ENCODE measurements at regions of chr1 and their contacts with region 1.

Region 1: GRCh38 chr1:38012363-38013226 is at the start of gene UTP11:
- DNase-seq: peak; percentile 68 to 96 (median 90)
- ATAC-seq: peak; percentile 90 to 94
- H3K4me3 Mint-ChIP-seq: peak within 1 kb of the TSS; percentile 93 to 100 (median 99)
- H3K27ac Mint-ChIP-seq: peak within 1 kb of the TSS; percentile 92 to 100 (median 98)
- H3K4me1 Mint-ChIP-seq: peaks cover 23 to 69% (median 57%) of the 10 kb centered on the region in 4 donors
- H3K27me3 Mint-ChIP-seq: no peaks in the 10 kb centered on the region
- polyA plus RNA-seq, gene UTP11: 16.6 to 21.4 (median 17.4) TPM

Region 2: GRCh38 chr1:37974567-37974966 is 38.0 kb before region 1 on chr1:
- POLR2A ChIA-PET with region 1: no interaction called
- DNase-seq: no peak
- ATAC-seq: no peak
- H3K4me3 Mint-ChIP-seq: no peak overlapping the region
- H3K27ac Mint-ChIP-seq: peak overlapping the region in 3 of 10 donors; percentile 6 to 49 (median 32)
- H3K4me1 Mint-ChIP-seq: peaks cover 10 to 31% (median 20%) of the 10 kb centered on the region in 4 donors
- H3K27me3 Mint-ChIP-seq: no peaks in the 10 kb centered on the region

Region 3: GRCh38 chr1:37989361-37989930 is 23.1 kb before region 1 on chr1:
- POLR2A ChIA-PET with region 1: interaction called, 80 read pairs
- DNase-seq: peak in 5 of 10 donors; percentile 26 to 69 (median 37)
- ATAC-seq: peak; percentile 42 to 47
- H3K4me3 Mint-ChIP-seq: peak overlapping the region; percentile 89 to 100 (median 98)
- H3K27ac Mint-ChIP-seq: peak overlapping the region; percentile 91 to 99 (median 96)
- H3K4me1 Mint-ChIP-seq: peaks cover 9 to 36% (median 29%) of the 10 kb centered on the region in 4 donors
- H3K27me3 Mint-ChIP-seq: no peaks in the 10 kb centered on the region

Region 4: DNA sequence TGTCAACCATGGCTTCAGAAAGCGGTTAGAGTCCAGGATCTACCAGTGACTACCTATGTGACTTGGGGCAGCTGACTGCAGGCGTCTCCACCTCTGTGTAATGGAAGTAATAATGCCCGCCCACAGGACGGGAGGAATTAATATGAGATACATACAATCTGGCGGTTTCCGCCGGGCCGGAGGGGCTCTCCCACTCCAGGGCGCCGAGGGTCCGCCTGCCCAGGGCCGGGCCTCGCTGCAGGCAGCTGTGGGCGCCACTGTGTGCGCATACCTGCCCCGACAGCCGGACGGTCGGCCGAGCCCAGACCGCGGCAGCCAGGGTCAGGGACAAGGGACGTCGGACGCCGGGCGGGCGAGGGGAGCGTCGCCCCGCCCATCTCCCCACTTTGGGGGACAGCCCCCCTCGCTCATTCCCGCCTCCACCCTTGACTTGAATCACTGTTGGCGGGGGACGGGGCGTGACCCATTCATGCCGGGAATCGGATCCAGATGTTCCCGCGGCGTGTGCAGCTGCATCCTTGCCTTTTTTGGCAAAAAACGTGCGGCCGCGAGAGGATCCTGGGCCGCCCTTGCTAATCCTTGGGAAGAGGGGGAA is 16.7 kb before region 1 on chr1:
- POLR2A ChIA-PET with region 1: interaction called, 80 read pairs
- DNase-seq: peak in 1 of 10 donors; percentile 7
- ATAC-seq: peak in 1 of 2 donors; percentile 49
- H3K4me3 Mint-ChIP-seq: peak overlapping the region in 8 of 10 donors; percentile 37 to 89 (median 81)
- H3K27ac Mint-ChIP-seq: peak overlapping the region in 7 of 10 donors; percentile 52 to 96 (median 90)
- H3K4me1 Mint-ChIP-seq: peaks cover 17 to 54% (median 48%) of the 10 kb centered on the region in 4 donors
- H3K27me3 Mint-ChIP-seq: no peaks in the 10 kb centered on the region

Region 5: DNA sequence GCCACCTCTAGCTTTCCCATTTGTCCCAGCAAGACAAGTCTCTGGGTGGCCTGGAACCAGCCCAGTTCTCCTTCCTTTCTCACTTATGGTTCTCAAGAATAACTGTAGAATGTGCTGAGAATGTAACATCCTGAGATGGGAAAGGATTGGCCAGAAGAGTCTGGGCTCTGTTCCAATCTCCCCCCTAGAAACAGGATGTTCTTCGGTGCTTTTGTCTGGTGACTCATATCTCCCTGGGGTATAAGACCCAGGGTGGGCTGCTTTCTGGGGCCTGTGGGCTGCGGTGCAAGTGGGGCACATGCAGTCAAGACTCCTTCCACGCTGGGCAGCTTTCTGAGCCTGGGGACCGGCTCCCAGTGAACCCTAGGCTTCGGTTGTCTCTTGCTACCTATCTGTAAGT is 285.2 kb after region 1 on chr1:
- POLR2A ChIA-PET with region 1: no interaction called
- DNase-seq: no peak
- ATAC-seq: no peak
- H3K4me3 Mint-ChIP-seq: no peak overlapping the region
- H3K27ac Mint-ChIP-seq: peak overlapping the region in 1 of 10 donors; percentile 15
- H3K4me1 Mint-ChIP-seq: peaks cover 0 to 5% (median 1%) of the 10 kb centered on the region in 4 donors
- H3K27me3 Mint-ChIP-seq: peaks cover 35 to 74% (median 52%) of the 10 kb centered on the region in 5 donors

Measured in naive thymus-derived CD8-positive, alpha-beta T cell (primary cell).